Activated B cell treated with CpG ODN at 0.5 μM for 24 hours (primary cell): ENCODE measurements at regions of chr22 and their contacts with region 1.

Region 1: DNA sequence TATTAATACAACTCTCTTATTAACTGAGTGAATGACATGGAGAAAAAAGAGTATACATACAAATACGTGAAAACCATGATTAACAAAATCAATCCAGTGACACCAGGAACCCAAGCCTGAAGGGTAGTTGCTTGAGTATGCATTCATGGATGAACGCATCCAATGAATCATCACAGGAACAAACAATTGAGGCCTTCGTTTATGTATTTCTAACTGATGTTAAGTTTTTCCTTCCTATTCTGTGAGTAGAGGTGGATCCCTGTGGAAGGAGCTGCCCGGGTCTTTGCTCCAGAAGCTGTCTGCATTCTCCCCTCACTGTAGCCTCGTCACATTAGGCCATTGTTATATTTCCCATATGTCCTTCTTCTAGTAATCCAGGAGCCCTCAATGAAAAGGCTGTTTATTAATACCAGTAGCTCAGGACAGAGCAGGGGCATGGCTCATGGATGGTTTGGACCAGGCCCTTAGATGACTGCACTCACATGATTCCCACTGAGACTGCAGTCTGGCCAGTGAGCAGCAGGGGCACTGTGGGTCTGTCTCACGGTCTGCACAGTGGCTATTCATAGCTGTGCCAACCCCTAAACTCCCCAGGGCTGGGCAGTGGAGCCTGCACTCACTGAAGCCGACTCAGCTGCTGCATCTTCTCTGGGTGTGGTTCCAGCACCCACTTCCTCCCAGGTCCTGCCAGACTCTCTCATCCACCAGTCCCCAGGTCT is 128.1 kb upstream of the TOP3B start:
- DNase-seq: peak; percentile 82
- ATAC-seq: peak; percentile 92
- H3K4me3 Mint-ChIP-seq: peak overlapping the region; percentile 67
- H3K27ac Mint-ChIP-seq: peak overlapping the region; percentile 95
- H3K4me1 Mint-ChIP-seq: peaks cover 47% of the 10 kb centered on the region
- H3K27me3 Mint-ChIP-seq: no peaks in the 10 kb centered on the region
- CTCF ChIP-seq: no peak

Region 2: DNA sequence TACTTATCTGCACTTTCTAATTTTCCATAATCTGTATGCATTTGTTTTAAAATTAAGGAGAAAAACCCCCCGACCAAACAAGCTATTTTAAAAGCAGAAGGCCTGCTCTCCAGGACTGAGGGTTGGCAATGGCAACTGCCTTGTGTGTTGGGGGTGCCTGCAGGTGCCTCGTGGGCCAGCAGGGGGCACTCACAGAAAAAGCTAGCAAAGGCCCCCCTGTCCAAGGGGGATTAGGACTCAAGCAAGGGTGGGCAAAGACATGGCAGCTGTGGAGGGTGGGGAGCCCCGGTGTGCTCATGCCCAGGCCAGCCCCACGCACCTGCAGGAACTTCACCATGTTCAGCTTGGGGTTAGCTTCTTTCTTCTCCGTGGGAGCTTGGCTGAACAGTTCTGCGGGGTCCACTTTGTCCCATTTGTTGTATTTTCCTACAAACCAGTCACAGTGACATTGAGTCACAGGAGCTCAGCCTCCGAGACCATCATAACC is 138.4 kb before region 1 on chr22:
- CTCF ChIA-PET with region 1: interaction called, 13 read pairs
- POLR2A ChIA-PET with region 1: no interaction called
- intact Hi-C with region 1: no loop called
- DNase-seq: peak; percentile 56
- ATAC-seq: peak; percentile 77
- H3K4me3 Mint-ChIP-seq: no peak overlapping the region
- H3K27ac Mint-ChIP-seq: no peak overlapping the region
- H3K4me1 Mint-ChIP-seq: peaks cover 2% of the 10 kb centered on the region
- H3K27me3 Mint-ChIP-seq: no peaks in the 10 kb centered on the region
- CTCF ChIP-seq: peak; percentile 79

Region 3: GRCh38 chr22:22043296-22044078 is 67.2 kb before region 1 on chr22:
- CTCF ChIA-PET with region 1: interaction called, 21 read pairs
- POLR2A ChIA-PET with region 1: interaction called, 24 read pairs
- intact Hi-C with region 1: no loop called
- DNase-seq: no peak
- ATAC-seq: peak; percentile 73
- H3K4me3 Mint-ChIP-seq: peak overlapping the region; percentile 82
- H3K27ac Mint-ChIP-seq: peak overlapping the region; percentile 82
- H3K4me1 Mint-ChIP-seq: peaks cover 73% of the 10 kb centered on the region
- H3K27me3 Mint-ChIP-seq: no peaks in the 10 kb centered on the region
- CTCF ChIP-seq: no peak

Region 4: DNA sequence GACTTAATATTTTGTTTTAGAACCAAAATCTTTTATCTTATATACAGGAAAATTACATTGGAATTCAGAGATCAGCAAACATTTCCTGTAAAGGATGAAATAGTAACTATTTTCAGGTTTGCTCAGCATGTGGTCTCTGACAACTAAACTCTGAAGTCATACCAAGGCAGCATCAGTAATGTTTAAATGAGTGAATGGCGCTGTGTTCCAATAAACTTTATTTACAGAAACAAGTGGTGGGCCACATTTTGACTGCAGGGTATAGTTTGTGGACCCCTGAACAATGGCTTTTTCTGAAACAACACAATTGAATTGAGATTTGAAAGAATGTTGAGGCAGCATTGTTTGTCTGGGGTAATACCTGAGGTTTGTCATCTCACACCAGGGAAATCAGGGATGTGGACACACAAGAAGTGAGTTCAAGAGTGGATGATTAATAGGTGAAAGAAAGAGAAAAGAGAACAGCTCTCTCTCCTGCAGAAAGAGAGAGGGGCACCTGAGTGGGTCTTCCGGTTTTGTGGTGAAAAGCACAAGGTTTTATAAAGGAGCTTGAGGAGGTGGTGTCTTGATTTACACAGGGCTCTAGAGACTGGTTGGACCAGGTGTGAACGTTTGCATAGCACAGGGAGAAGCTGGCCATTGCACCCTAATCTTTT is 20.4 kb after region 1 on chr22:
- CTCF ChIA-PET with region 1: interaction called, 8 read pairs
- POLR2A ChIA-PET with region 1: interaction called, 4 read pairs
- intact Hi-C with region 1: loop called (anchors 2 kb)
- DNase-seq: no peak
- ATAC-seq: no peak
- H3K4me3 Mint-ChIP-seq: no peak overlapping the region
- H3K27ac Mint-ChIP-seq: no peak overlapping the region
- H3K4me1 Mint-ChIP-seq: peaks cover 5% of the 10 kb centered on the region
- H3K27me3 Mint-ChIP-seq: no peaks in the 10 kb centered on the region
- CTCF ChIP-seq: no peak

Region 5: DNA sequence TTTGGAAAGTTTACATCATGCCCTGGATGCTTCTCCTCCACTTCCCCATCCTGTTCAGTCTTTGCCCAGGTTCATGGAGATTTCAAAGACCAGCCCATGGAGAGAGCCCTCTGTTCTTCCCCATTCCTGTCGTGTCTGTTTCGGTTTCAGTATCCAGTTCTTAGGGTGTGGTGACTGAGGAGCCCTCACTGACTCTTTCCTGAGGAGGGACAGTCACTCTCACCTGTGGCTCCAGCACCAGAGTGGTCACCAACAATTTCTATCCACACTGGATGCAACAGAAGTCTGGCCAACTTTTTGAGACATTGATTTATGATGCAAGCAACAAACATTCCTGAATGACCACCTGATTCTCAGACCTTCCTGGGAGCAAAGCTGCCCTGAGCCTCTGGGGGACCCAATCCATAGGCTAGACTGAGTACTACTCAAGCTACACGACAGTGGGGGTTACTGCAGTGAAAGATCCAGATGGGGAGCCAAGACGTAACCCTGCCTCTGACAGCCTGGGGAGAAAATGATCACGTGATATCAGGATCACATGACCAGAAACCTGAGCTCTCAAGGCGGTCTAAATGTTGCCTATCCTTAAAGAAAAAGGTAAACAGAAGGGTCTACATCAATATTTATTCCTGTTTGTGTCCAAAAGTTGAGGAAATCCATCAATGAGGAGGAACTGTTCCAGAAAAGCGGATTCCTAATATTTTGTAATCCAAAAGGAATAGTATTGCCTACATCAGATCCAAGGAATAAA is 57.7 kb after region 1 on chr22:
- CTCF ChIA-PET with region 1: interaction called, 20 read pairs
- POLR2A ChIA-PET with region 1: interaction called, 36 read pairs
- intact Hi-C with region 1: loop called (anchors 1 kb)
- DNase-seq: peak; percentile 31
- ATAC-seq: peak; percentile 54
- H3K4me3 Mint-ChIP-seq: peak overlapping the region; percentile 84
- H3K27ac Mint-ChIP-seq: peak overlapping the region; percentile 97
- H3K4me1 Mint-ChIP-seq: peaks cover 86% of the 10 kb centered on the region
- H3K27me3 Mint-ChIP-seq: no peaks in the 10 kb centered on the region
- CTCF ChIP-seq: no peak

Region 6: GRCh38 chr22:22207845-22208564 is 97.3 kb after region 1 on chr22:
- CTCF ChIA-PET with region 1: interaction called, 25 read pairs
- POLR2A ChIA-PET with region 1: interaction called, 3 read pairs
- intact Hi-C with region 1: loop called (anchors 1 kb)
- DNase-seq: peak; percentile 80
- ATAC-seq: peak; percentile 83
- H3K4me3 Mint-ChIP-seq: peak overlapping the region; percentile 70
- H3K27ac Mint-ChIP-seq: peak overlapping the region; percentile 90
- H3K4me1 Mint-ChIP-seq: peaks cover 56% of the 10 kb centered on the region
- H3K27me3 Mint-ChIP-seq: no peaks in the 10 kb centered on the region
- CTCF ChIP-seq: no peak

Region 7: DNA sequence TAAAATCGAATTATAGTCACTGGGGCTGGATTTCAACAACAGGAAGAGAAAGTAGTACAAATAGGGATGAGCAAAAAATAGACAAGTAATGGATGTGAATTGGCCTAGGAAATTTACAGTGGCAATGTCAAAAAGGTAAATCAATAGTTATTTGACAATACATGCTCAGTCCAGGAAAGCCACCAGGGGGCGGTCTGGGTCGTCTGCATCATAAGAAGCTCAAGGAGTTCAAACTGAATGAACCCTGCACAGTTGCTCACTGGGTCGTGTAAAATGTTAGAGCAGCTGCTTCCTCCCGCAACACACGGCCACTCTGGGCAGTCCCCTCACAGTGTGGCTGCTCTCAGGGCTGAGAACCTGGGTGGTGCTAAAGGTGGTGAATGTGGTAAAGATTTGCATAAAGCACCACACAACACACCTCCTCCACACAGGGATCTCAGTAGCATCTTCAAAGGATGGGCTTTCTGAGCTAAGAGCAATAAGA is 312.0 kb after region 1 on chr22:
- CTCF ChIA-PET with region 1: interaction called, 10 read pairs
- POLR2A ChIA-PET with region 1: no interaction called
- intact Hi-C with region 1: no loop called
- DNase-seq: peak; percentile 79
- ATAC-seq: peak; percentile 99
- H3K4me3 Mint-ChIP-seq: peak overlapping the region; percentile 62
- H3K27ac Mint-ChIP-seq: peak overlapping the region; percentile 70
- H3K4me1 Mint-ChIP-seq: peaks cover 76% of the 10 kb centered on the region
- H3K27me3 Mint-ChIP-seq: no peaks in the 10 kb centered on the region
- CTCF ChIP-seq: peak; percentile 62